ENCODE measurements at regions of chr4 and their contacts with region 1.

Region 1: GRCh38 chr4:139453371-139454110 is 380 bp upstream of the RAB33B start:
- DNase-seq: peak; percentile 98
- ATAC-seq: peak; percentile 98

Region 2: GRCh38 chr4:139214039-139214534 is 239.5 kb before region 1 on chr4:
- intact Hi-C with region 1: no loop called
- DNase-seq: peak; percentile 50
- ATAC-seq: peak; percentile 92

Region 3: DNA sequence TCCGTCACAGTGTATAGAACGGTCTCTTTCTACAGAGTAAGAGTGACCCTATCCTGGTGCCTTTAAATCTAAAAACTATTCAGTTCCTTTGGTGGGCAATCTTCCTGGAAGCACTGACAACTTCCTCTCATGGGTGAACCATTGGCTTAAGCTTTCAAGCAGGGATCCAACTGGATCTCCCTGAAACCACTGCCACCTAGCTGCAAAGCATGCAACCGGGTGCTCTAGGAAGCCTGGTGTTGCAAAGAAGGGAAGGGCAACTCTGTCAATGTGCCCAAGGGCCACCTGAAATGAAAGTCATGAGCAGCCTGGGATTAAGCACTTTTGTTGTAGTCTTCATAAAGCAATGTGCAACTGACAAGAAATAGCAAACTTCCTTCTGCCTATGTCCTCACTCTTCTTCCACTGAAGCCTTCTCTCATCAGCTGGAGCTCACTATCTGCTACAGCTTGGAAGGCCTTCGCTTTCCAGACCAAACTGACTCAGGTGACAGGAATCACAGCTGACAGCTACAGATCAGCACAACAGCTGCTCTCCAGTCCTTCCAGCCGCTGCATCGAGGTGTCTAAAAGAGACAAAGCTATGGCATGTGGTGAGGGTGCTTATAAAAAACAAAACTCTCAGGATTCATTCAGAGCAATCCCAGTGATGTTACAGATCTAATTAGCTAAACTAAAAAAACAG is 56.3 kb after region 1 on chr4:
- intact Hi-C with region 1: loop called (anchors 10 kb)
- DNase-seq: no peak
- ATAC-seq: peak; percentile 81

Region 4: GRCh38 chr4:139704915-139705485 is 251.5 kb after region 1 on chr4:
- intact Hi-C with region 1: no loop called
- DNase-seq: no peak
- ATAC-seq: no peak

Region 5: GRCh38 chr4:140012688-140013486 is 559.3 kb after region 1 on chr4:
- intact Hi-C with region 1: no loop called
- DNase-seq: peak; percentile 43
- ATAC-seq: peak; percentile 90